CD4-positive, alpha-beta memory T cell (primary cell): ENCODE measurements at regions of chr3 and their contacts with region 1.

Region 1: GRCh38 chr3:153161138-153161713 is 800 bp upstream of the RAP2B start:
- DNase-seq: peak; percentile 90 to 96 (median 94)
- H3K4me3 ChIP-seq: peak overlapping the region; percentile 75 to 93
- H3K4me3 Mint-ChIP-seq: peak overlapping the region; percentile 97 to 100 (median 99)
- H3K27ac ChIP-seq: peak overlapping the region; percentile 76
- H3K27ac Mint-ChIP-seq: peak overlapping the region; percentile 96 to 98 (median 98)
- H3K4me1 ChIP-seq: peaks cover 31% of the 10 kb centered on the region
- H3K4me1 Mint-ChIP-seq: peaks cover 19 to 57% (median 33%) of the 10 kb centered on the region in 4 donors
- H3K27me3 ChIP-seq: no peaks in the 10 kb centered on the region
- H3K27me3 Mint-ChIP-seq: no peaks in the 10 kb centered on the region

Region 2: GRCh38 chr3:151203051-151203420 is 1958.2 kb before region 1 on chr3 and contains the start of gene GPR171:
- CTCF ChIA-PET with region 1: no interaction called
- POLR2A ChIA-PET with region 1: no interaction called
- intact Hi-C with region 1: loop called (anchors 10 kb)
- DNase-seq: peak; percentile 80 to 87 (median 82)
- H3K4me3 ChIP-seq: peak within 1 kb of the TSS; percentile 59 to 63
- H3K4me3 Mint-ChIP-seq: peak within 1 kb of the TSS; percentile 73 to 89 (median 86)
- H3K27ac ChIP-seq: peak within 1 kb of the TSS; percentile 75
- H3K27ac Mint-ChIP-seq: peak within 1 kb of the TSS; percentile 87 to 98 (median 97)
- H3K4me1 ChIP-seq: peaks cover 83% of the 10 kb centered on the region
- H3K4me1 Mint-ChIP-seq: peaks cover 45 to 94% (median 59%) of the 10 kb centered on the region in 4 donors
- H3K27me3 ChIP-seq: no peaks in the 10 kb centered on the region
- H3K27me3 Mint-ChIP-seq: no peaks in the 10 kb centered on the region
- total RNA-seq, gene GPR171: 116 to 129 TPM

Region 3: DNA sequence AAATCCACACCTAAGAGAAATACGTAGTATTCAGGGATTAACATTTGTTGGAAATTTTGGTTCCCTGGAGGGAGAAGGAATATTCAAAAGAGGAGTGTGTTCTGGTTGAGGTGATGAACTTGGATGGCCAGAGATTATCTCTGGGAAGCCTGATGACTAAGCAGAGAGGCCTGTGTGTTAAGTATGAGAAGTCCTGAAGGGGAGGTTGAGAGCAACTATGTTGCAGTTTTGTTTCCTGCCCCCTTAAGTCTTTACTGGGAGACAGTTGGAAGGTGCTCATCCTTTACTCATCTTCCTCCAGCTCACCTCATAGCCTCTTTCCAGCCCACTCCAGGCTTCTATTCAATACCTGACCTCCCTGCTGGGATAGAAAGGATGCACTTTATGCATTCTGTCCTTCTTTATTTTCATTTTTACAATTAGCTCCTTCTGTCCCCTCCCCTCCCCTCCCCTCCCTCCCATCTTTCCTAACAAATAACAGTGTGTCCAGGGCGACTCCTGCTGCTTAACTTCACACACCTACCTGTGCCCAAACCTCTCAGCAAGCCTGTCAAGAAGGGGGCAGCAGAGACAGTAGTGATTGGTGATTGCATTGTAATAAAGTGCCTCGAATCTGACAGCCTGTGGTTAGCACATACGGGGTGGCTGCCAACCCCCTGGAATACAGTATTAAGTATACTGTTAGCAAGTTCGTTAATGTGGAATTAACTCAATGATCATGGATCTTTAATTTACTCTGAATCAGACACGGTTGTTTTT is 12.7 kb after region 1 on chr3:
- CTCF ChIA-PET with region 1: interaction called, 5 read pairs
- POLR2A ChIA-PET with region 1: interaction called, 20 read pairs
- intact Hi-C with region 1: no loop called
- DNase-seq: no peak
- H3K4me3 ChIP-seq: no peak overlapping the region
- H3K4me3 Mint-ChIP-seq: no peak overlapping the region
- H3K27ac ChIP-seq: no peak overlapping the region
- H3K27ac Mint-ChIP-seq: peak overlapping the region; percentile 17 to 83 (median 68)
- H3K4me1 ChIP-seq: peaks cover 17% of the 10 kb centered on the region
- H3K4me1 Mint-ChIP-seq: peaks cover 17 to 48% (median 38%) of the 10 kb centered on the region in 4 donors
- H3K27me3 ChIP-seq: no peaks in the 10 kb centered on the region
- H3K27me3 Mint-ChIP-seq: no peaks in the 10 kb centered on the region

Region 4: DNA sequence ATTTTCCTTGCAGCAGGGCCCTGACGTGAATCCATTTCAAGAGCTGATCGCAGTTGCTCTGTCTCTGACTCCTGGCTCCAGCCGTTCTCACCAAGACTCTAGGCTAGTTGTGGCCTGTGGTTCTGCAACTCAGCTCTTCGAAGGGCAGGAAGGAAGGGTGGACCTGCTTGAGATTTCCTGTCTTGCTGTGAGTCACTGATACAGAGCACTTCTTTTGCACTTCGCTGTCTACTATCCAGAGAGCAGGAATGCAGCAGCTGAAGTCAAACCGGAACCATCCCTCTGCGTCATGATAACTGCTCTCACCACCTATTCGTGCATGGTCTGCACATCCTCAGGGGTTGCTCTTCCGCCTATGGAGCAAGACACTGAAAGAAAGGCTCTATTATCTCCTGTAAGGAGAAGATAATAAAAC is 60.5 kb after region 1 on chr3:
- CTCF ChIA-PET with region 1: interaction called, 19 read pairs
- POLR2A ChIA-PET with region 1: interaction called, 206 read pairs
- intact Hi-C with region 1: loop called (anchors 1 kb)
- DNase-seq: peak; percentile 86 to 95 (median 90)
- H3K4me3 ChIP-seq: peak overlapping the region; percentile 12 to 23
- H3K4me3 Mint-ChIP-seq: peak overlapping the region; percentile 41 to 86 (median 76)
- H3K27ac ChIP-seq: peak overlapping the region; percentile 67
- H3K27ac Mint-ChIP-seq: peak overlapping the region; percentile 90 to 99 (median 98)
- H3K4me1 ChIP-seq: peaks cover 84% of the 10 kb centered on the region
- H3K4me1 Mint-ChIP-seq: peaks cover 50 to 72% (median 60%) of the 10 kb centered on the region in 4 donors
- H3K27me3 ChIP-seq: no peaks in the 10 kb centered on the region
- H3K27me3 Mint-ChIP-seq: no peaks in the 10 kb centered on the region

Region 5: DNA sequence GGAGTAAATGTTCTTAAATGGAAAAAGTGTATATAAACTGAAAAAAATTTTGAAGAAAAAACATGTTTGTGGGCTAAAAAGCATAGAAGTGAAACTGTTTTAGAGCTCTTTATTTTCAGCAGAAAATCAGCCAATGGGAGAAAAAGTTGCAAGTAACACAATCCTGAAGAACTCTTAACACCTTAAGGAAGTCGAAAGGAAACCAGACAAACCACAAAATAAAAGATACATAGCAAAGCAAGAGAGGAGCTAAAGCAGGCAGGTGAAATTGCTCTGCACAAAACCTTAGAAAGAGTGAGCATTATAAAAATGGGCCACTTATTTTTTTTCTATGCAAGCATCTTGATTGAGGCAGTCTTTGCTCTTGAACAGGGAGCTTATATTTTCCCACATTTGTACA is 301.3 kb after region 1 on chr3:
- CTCF ChIA-PET with region 1: no interaction called
- POLR2A ChIA-PET with region 1: interaction called, 5 read pairs
- intact Hi-C with region 1: loop called (anchors 1 kb)
- DNase-seq: peak in 4 of 5 donors; percentile 29 to 43 (median 36)
- H3K4me3 ChIP-seq: no peak overlapping the region
- H3K4me3 Mint-ChIP-seq: peak overlapping the region in 5 of 8 donors; percentile 31 to 78 (median 48)
- H3K27ac ChIP-seq: no peak overlapping the region
- H3K27ac Mint-ChIP-seq: peak overlapping the region; percentile 7 to 74 (median 57)
- H3K4me1 ChIP-seq: peaks cover 19% of the 10 kb centered on the region
- H3K4me1 Mint-ChIP-seq: peaks cover 27 to 50% (median 37%) of the 10 kb centered on the region in 4 donors
- H3K27me3 ChIP-seq: no peaks in the 10 kb centered on the region
- H3K27me3 Mint-ChIP-seq: no peaks in the 10 kb centered on the region

Region 6: DNA sequence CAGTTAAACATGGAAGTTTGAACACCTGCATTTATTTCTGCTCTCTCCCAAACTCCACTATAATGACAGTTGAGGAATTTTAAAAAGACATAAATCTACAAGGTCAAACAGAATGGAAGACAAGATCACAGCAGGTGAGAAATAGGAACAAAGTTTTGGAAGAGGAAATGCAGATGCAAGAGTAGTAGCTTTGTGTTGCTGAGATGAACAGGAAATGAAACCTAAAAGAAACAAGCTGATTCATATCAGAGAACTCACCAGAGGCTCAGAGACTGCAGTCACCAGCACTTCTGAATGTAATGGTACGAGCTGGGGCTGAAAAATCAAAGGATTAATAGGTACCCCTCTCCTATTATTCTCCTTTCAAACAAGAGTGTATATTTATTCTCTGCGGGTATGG is 460.7 kb after region 1 on chr3:
- CTCF ChIA-PET with region 1: interaction called, 6 read pairs
- POLR2A ChIA-PET with region 1: interaction called, 78 read pairs
- intact Hi-C with region 1: loop called (anchors 2 kb)
- DNase-seq: peak in 4 of 5 donors; percentile 21 to 40 (median 32)
- H3K4me3 ChIP-seq: peak overlapping the region in 1 of 2 donors; percentile 38
- H3K4me3 Mint-ChIP-seq: peak overlapping the region; percentile 46 to 84 (median 66)
- H3K27ac ChIP-seq: peak overlapping the region; percentile 14
- H3K27ac Mint-ChIP-seq: peak overlapping the region; percentile 43 to 92 (median 75)
- H3K4me1 ChIP-seq: peaks cover 60% of the 10 kb centered on the region
- H3K4me1 Mint-ChIP-seq: peaks cover 46 to 61% (median 55%) of the 10 kb centered on the region in 4 donors
- H3K27me3 ChIP-seq: no peaks in the 10 kb centered on the region
- H3K27me3 Mint-ChIP-seq: no peaks in the 10 kb centered on the region

Region 7: DNA sequence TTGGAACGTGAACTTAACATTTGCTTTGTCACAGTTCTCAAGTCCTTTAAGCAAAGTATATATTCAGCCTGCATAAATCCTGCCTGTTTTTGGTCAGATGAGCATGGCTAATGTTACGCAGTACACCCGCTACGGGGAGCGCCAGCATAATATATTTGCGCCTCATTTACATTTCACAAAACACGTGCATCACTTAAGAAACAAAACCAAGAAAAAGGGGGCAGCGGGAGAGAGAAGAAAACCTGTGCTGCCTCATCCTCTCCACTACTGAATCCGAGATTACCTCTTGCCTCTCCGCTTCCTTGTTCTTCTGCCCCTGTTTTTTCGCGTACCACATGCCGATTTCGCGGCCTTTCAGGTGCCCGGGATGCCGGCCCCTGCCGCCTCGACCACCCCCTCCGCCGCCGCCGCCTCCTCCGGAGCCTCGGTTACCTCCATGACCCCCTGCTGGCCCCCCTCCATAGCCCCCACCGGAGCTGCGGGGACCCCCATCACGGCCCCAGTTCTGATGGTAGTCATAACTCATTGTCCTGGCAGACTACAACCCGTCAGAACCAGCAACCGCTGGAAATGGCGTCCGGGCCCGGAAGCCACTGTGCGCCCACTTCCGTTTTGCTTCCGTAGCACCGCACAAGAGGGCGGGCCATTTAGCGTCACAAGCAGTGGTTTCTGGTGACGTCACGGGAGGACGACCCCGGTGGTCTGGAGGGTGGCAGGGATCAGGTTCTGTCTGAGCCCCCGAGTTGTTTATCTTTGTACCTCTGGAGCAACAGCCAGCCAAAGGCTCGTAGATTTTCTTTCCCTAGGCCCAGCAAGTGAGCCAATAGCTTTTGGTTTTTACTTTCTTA is 1162.9 kb after region 1 on chr3 and contains the start of gene DHX36:
- CTCF ChIA-PET with region 1: no interaction called
- POLR2A ChIA-PET with region 1: interaction called, 4 read pairs
- intact Hi-C with region 1: loop called (anchors 5 kb)
- DNase-seq: peak; percentile 88 to 91 (median 90)
- H3K4me3 ChIP-seq: peak within 1 kb of the TSS; percentile 86 to 89
- H3K4me3 Mint-ChIP-seq: peak within 1 kb of the TSS in 7 of 8 donors; percentile 95 to 99 (median 98)
- H3K27ac ChIP-seq: peak within 1 kb of the TSS; percentile 89
- H3K27ac Mint-ChIP-seq: peak within 1 kb of the TSS; percentile 99 to 100 (median 99)
- H3K4me1 ChIP-seq: peaks cover 49% of the 10 kb centered on the region
- H3K4me1 Mint-ChIP-seq: peaks cover 9 to 20% (median 14%) of the 10 kb centered on the region in 4 donors
- H3K27me3 ChIP-seq: no peaks in the 10 kb centered on the region
- H3K27me3 Mint-ChIP-seq: peaks cover 0 to 2% of the 10 kb centered on the region in 2 donors
- total RNA-seq, gene DHX36: 91.8 to 101 TPM